Activated CD8-positive, alpha-beta memory T cell treated with anti-CD3 and anti-CD28 coated beads, Interleukin-2, amount 10 ng/mL, durations not matched to agents 7 days and 5 days (primary cell): ENCODE measurements at regions of chr3 and their contacts with region 1.

Region 1: DNA sequence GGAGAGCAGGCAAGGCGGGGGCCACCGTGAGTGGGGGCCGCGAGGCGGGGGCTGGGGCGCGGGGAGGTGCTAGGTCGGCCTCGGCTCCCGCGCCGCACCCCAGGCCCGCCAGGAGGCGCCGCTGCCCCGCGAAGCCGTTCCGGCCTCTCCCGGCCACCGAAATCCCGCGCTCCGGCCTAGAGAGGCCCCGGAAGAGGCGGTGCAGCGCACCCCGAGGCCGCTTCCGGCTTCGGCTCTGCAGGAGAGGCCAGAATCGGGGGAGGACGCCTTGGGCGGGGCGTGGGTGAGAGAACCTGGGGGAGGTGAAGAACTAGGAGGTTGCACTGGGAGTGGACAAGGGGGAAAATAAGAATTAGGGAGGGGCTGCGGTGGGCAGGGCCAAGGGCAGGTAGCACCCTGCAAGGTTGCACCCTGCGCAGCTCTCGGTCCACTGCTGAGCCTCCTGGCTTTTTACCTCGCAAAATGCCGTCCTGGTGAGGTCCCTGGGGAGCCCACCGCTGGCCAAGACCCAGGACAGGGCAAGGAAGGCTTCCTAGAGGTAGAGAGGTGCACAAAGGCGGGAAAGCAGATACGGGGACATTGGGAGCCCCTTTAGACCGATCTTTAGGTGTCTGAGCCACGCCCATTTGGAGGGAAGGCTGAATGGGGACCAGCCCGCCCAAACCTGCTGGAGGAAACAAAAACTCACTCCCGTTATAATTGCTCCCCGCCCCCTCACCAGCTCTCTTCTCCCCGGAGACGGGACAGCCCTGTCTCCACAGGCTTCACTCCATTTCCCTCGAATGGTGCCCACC is 8.4 kb upstream of the GNAI2 start:
- DNase-seq: peak; percentile 96
- ATAC-seq: peak; percentile 89
- H3K4me3 Mint-ChIP-seq: peak overlapping the region; percentile 88
- H3K27ac Mint-ChIP-seq: peak overlapping the region; percentile 94
- H3K4me1 Mint-ChIP-seq: peaks cover 27% of the 10 kb centered on the region
- H3K27me3 Mint-ChIP-seq: peaks cover 14% of the 10 kb centered on the region

Region 2: DNA sequence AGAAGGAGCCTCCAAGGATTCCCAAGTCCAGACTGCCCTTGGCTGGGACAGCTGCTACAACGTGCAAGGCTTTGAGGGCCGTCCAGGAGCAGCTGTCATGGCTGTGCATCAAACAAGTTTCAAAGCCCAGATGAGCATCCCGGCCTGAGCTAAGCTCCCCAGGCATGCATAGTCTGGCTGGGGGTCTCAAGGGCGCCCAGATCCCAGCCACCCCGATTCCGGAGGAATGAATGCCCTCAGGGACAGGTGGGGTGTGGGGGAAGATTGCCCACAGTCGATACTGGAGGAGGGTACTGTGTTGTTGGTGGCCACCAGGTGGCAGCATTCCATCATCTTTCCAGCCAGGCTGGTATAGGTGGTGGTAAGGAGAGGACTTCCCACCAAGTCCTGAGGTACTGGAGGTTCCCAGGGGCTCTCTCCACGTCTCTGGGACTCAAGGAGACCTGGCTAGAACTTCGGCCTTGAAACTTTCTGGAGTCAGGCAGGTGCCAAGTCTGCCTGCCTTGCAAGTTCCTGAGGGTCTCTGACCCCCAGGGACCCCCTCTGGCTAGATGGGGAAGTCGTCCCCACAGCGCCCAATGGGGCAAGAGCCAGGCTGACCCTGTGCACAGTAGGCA is 106.1 kb before region 1 on chr3:
- CTCF ChIA-PET with region 1: interaction called, 34 read pairs
- DNase-seq: peak; percentile 78
- ATAC-seq: peak; percentile 85
- H3K4me3 Mint-ChIP-seq: no peak overlapping the region
- H3K27ac Mint-ChIP-seq: no peak overlapping the region
- H3K4me1 Mint-ChIP-seq: no peaks in the 10 kb centered on the region
- H3K27me3 Mint-ChIP-seq: no peaks in the 10 kb centered on the region

Region 3: DNA sequence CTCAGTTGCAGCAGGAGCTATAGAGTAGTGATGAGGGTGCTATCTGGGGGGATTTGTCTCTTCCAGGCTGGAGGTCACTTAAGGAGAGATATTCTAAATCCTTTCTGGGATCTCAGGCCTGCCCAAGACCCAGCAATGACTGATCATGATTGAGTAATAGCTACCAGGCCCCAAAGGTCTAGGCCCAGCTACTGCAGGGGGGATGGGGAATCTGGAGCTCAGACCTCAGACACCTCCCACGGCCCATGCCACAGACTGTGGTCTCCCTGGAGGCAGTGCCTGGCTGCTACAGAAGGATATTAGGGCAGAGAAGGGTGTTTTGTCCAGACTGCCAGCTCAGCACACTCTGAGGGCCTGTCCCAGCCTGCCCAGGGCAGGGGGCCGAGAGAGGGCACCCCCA is 15.7 kb before region 1 on chr3:
- CTCF ChIA-PET with region 1: interaction called, 17 read pairs
- DNase-seq: no peak
- ATAC-seq: peak; percentile 43
- H3K4me3 Mint-ChIP-seq: no peak overlapping the region
- H3K27ac Mint-ChIP-seq: no peak overlapping the region
- H3K4me1 Mint-ChIP-seq: peaks cover 2% of the 10 kb centered on the region
- H3K27me3 Mint-ChIP-seq: peaks cover 12% of the 10 kb centered on the region

Region 4: GRCh38 chr3:50260027-50260941 is 32.7 kb after region 1 on chr3:
- CTCF ChIA-PET with region 1: interaction called, 231 read pairs
- DNase-seq: peak; percentile 91
- ATAC-seq: peak; percentile 97
- H3K4me3 Mint-ChIP-seq: peak overlapping the region; percentile 47
- H3K27ac Mint-ChIP-seq: peak overlapping the region; percentile 32
- H3K4me1 Mint-ChIP-seq: peaks cover 7% of the 10 kb centered on the region
- H3K27me3 Mint-ChIP-seq: no peaks in the 10 kb centered on the region

Region 5: DNA sequence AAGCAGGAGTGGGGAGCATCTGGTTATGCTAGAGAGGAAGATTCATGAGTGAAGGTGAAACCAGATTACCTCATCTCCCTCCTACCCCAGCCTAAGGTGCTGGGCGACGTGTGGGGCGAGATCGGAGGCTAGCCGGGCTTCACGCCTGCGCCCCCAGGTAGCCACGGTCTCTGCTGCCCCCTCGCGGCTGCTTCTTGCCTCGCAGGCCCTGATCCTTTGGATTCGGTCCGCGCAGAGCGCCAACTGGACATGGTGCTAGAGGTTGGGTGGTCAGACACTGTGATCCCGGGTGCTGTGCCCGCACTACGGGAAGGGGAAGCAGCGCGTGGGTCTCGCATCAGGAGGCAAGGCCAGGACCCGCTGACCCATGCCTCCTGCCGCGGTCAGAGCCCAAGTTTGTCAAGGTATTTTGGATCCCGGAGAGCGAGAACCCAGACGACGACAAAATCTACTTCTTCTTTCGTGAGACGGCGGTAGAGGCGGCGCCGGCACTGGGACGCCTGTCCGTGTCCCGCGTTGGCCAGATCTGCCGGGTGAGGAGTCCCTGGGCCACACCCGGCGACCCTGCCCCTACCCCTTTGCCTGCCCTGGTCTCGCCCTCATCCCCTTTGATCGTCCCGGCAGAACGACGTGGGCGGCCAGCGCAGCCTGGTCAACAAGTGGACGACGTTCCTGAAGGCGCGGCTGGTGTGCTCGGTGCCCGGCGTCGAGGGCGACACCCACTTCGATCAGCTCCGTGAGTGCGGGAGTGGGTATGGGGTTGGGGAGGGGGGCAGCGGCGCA is 45.5 kb after region 1 on chr3:
- CTCF ChIA-PET with region 1: interaction called, 84 read pairs
- DNase-seq: peak; percentile 92
- ATAC-seq: peak; percentile 89
- H3K4me3 Mint-ChIP-seq: peak overlapping the region; percentile 58
- H3K27ac Mint-ChIP-seq: no peak overlapping the region
- H3K4me1 Mint-ChIP-seq: peaks cover 32% of the 10 kb centered on the region
- H3K27me3 Mint-ChIP-seq: peaks cover 54% of the 10 kb centered on the region

Region 6: DNA sequence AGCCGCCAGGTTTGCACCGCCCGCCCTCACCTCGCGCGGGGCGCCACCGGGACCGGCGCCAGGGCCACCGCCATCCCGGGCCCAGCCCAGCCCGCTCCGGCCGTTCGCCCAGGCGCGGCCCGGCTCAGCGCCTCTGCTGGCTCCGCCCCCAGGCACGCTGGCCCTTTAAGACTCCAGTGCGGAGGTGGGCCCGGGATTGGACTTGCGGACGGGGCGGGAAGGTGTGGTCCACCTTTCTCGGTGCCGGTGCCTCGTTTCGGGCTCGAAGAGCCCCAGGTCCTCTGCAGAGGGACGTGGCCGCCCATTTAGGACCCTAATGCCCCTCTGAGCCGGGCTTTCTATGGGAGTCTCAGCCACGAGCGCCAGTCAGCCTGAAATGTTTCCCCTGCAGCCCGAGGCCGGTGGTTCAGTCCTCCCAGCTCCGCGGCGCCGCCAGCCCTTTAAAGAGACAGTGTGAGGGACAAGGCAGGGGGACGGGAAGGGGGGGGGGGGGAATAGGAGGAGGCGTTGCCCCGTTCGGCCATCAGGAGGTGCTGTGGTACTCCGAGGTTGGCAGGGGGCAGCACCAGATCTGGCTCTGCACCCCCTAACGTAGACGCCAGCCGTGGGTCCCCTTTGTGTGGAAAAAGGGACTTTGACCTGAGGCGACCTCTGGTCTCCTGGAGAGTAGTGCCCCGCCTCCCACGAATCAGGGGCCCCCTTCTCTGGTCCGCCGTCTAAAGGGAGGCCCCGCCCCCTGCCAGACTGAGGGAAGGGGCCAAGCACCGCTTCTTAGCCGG is 93.9 kb after region 1 on chr3:
- CTCF ChIA-PET with region 1: interaction called, 10 read pairs
- DNase-seq: peak; percentile 90
- ATAC-seq: peak; percentile 76
- H3K4me3 Mint-ChIP-seq: peak overlapping the region; percentile 89
- H3K27ac Mint-ChIP-seq: peak overlapping the region; percentile 93
- H3K4me1 Mint-ChIP-seq: peaks cover 37% of the 10 kb centered on the region
- H3K27me3 Mint-ChIP-seq: no peaks in the 10 kb centered on the region